ENCODE measurements at regions of chr7 and their contacts with region 1.

Region 1: DNA sequence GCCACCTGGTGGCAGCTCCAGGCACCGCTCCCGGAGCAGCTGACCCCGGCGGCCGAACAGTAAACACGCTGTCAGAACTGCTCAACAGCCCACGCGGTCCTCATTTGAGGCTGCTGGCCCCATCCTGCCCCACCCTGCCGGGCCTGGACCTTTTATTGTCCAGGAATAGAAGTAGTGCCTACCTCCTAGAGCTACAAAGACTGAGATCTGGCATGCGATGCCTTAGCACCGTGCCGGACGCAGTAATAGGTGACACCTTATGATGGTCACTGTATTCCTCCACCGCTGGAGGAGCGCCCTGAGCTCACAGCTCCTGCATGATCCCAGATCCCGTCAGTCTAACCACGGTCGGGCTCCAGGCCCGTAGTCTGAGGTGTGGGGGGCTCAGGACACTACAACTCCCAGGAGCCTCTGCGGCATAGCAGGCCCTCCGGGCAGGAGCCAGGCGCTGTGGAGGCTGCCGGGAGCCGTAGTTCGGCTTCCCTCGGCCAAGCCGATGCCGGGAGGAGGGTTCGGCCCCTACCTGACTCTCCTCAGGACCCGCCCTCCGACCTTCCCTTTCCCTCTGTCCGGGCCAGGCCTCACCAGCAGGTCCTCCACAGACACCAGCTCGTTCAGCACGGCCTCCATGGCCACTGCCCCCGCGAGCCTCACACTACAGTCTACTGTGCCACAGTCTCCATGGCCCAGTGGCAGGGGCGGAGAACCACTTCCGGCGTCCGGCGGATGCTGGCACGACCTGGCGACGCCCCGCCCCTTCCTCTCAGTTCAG is at the start of gene FIS1:
- DNase-seq: peak; percentile 85 to 93
- ATAC-seq: peak; percentile 97 to 98
- H3K4me3 ChIP-seq: peak within 1 kb of the TSS; percentile 88
- H3K27ac ChIP-seq: peak within 1 kb of the TSS; percentile 86 to 93
- H3K4me1 ChIP-seq: peaks cover 15% of the 10 kb centered on the region
- CTCF ChIP-seq: peak; percentile 75
- EP300 ChIP-seq: no peak
- POLR2A ChIP-seq: no peak; the same call in 1 of the 2 replicates
- RAD21 ChIP-seq: peak; percentile 43 to 66; a peak in 4 of 5 replicates
- polyA plus RNA-seq, gene FIS1: 111 TPM in 2 replicates

Region 2: DNA sequence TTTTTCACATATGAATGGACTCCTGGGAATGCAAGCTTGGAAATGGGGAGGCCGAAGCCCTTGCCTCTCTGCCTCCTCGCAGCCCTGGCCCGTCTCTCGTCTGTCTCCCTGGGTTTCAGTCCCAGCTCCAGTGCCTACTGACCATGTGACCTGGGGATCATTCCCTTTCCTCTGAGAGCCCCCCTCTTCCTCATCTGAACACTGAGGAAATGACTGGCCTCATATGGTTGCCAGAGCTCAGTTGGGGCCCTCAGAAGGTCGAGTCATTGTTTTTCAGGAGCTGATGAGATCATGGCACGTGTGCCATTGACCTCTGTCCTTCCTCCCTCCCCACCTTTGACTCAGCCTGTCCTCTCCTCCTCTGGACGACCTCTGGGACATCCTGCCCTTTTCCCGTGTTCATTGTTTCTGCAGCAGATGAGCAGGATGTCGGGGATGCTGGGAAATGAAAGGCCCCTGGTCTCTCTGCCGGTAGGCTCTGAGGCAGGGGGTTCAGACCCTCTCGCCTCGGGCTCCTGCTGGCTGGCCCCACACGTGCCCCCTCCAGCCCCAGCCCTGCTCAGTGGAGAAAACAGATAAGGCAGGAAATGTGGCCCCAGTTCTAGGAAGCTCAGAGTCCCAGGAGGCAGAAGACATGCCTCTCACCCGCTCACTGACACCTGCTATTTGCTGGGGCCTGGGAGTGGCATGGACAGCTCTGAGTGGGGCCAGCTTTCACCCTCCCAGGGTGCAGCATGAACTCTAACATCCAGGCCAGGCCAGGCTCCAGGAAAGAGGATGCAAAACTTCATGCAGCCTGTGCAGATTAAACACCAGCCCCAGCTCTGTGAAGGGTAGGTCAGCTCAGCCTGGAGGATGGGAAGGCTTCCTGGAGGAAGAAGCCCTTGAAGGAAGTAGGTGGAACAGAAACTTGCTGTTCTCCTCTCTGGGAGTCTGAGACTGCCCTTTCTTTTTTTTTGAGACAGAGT is 800.0 kb before region 1 on chr7:
- CTCF ChIA-PET with region 1: no interaction called
- POLR2A ChIA-PET with region 1: no interaction called
- DNase-seq: peak in 1 of 2 experiments; percentile 43
- ATAC-seq: peak; percentile 36 to 58
- H3K4me3 ChIP-seq: no peak overlapping the region
- H3K27ac ChIP-seq: peak overlapping the region in 1 of 2 experiments; percentile 63; a peak in 3 of 6 replicates
- H3K4me1 ChIP-seq: peaks cover 10% of the 10 kb centered on the region; the same call in 2 of the 3 replicates
- CTCF ChIP-seq: no peak
- EP300 ChIP-seq: no peak
- POLR2A ChIP-seq: no peak
- RAD21 ChIP-seq: no peak

Region 3: DNA sequence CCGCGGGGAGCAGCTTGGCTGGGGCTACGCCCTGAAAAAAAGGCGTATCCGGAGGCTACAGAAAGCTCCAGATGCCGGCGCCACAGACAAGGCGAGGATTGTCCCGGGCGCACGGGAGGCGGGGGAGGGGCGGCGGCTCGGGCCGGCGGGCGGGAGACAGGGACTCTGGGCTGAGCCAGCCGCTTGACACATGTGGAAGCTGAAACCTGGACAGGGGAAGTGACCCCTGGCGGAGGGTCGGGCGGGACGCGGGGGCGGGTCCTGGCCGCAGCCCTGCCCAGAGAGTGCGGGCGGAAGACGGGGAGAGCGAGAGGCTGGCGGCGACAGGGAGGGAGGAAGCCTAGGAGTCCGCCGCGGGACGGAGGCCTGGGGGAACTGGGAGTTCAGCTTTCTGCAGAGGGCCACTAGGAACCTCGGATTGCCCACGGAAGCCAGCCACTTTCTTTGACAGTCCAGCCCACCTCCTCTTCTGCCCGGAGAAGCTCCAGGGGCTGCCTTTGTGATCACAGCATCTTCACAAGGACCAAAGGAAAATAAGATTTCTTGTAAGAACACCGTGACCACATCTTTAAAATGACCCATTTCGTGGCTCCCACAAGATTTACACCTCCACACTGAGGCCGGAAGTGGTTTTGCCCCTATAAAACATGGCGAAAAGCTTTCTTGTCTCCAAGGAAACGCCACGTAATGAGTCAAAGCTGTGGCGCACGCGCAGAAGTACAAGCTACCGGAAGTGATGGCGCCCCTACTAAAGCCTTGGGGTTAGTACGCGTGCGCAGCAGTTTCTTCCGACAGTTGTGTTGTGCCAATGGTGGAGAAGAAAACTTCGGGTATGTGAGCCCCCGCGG is 26.9 kb before region 1 on chr7 and contains the starts of genes PLOD3 and ZNHIT1:
- CTCF ChIA-PET with region 1: interaction called, 49 read pairs
- POLR2A ChIA-PET with region 1: interaction called, 15 read pairs
- DNase-seq: peak; percentile 98 to 100
- ATAC-seq: peak; percentile 92 to 94
- H3K4me3 ChIP-seq: peak within 1 kb of the TSS; percentile 97
- H3K27ac ChIP-seq: peak within 1 kb of the TSS; percentile 90 to 98
- H3K4me1 ChIP-seq: peaks cover 17% of the 10 kb centered on the region
- CTCF ChIP-seq: no peak; the same call in 1 of the 3 replicates
- EP300 ChIP-seq: no peak
- POLR2A ChIP-seq: peak; percentile 73
- RAD21 ChIP-seq: no peak; a peak in 1 of 5 replicates
- polyA plus RNA-seq, gene PLOD3: 21.1 and 26.0 TPM in 2 replicates
- polyA plus RNA-seq, gene ZNHIT1: 29.5 and 33.2 TPM in 2 replicates

Region 4: DNA sequence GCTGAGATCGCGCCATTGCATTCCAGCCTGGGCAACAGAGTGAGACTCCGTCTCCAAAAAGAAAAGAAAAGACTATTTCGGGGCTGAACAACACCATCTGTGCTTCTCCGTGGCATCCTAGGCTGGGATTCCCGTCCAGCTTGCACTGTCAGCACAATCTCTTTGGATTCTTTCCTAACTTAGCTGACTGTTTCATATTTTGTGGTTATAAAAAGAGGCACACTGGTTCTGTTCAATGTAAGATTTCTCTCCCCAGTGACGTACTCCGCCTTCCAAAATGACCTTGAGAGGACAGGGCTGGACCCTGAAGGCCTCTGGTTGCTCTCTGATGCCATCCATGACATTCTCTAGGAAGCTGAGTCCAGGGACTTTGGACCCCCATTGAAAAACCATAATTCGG is 17.8 kb before region 1 on chr7:
- CTCF ChIA-PET with region 1: interaction called, 22 read pairs
- POLR2A ChIA-PET with region 1: no interaction called
- DNase-seq: no peak
- ATAC-seq: no peak
- H3K4me3 ChIP-seq: no peak overlapping the region
- H3K27ac ChIP-seq: no peak overlapping the region
- H3K4me1 ChIP-seq: peaks cover 3% of the 10 kb centered on the region; the same call in 2 of the 3 replicates
- CTCF ChIP-seq: no peak
- EP300 ChIP-seq: no peak
- POLR2A ChIP-seq: no peak
- RAD21 ChIP-seq: no peak

Measured in A549 (cell line).